SK-N-SH (cell line): ENCODE measurements at regions of chr10 and their contacts with region 1.

Region 1: GRCh38 chr10:116787893-116788665 is 45.7 kb upstream of the HSPA12A start:
- DNase-seq: peak; percentile 88
- H3K4me3 ChIP-seq: peak overlapping the region; percentile 29 to 53; a peak in 2 of 4 replicates
- H3K27ac ChIP-seq: no peak overlapping the region
- H3K4me1 ChIP-seq: peaks cover 0 to 3% of the 10 kb centered on the region in 2 experiments; a peak in 1 of 4 replicates
- H3K27me3 ChIP-seq: no peaks in the 10 kb centered on the region
- CTCF ChIP-seq: peak; percentile 99
- EP300 ChIP-seq: no peak
- RAD21 ChIP-seq: peak; percentile 87

Region 2: GRCh38 chr10:116627386-116627933 is 160.6 kb before region 1 on chr10:
- CTCF ChIA-PET with region 1: interaction called, 142 read pairs
- POLR2A ChIA-PET with region 1: no interaction called
- DNase-seq: peak; percentile 92
- H3K4me3 ChIP-seq: peak overlapping the region; percentile 32 to 39
- H3K27ac ChIP-seq: no peak overlapping the region
- H3K4me1 ChIP-seq: no peaks in the 10 kb centered on the region; a peak in 1 of 4 replicates
- H3K27me3 ChIP-seq: peaks cover 5% of the 10 kb centered on the region; the same call in 1 of the 2 replicates
- CTCF ChIP-seq: peak; percentile 45
- EP300 ChIP-seq: no peak
- RAD21 ChIP-seq: peak; percentile 65

Region 3: DNA sequence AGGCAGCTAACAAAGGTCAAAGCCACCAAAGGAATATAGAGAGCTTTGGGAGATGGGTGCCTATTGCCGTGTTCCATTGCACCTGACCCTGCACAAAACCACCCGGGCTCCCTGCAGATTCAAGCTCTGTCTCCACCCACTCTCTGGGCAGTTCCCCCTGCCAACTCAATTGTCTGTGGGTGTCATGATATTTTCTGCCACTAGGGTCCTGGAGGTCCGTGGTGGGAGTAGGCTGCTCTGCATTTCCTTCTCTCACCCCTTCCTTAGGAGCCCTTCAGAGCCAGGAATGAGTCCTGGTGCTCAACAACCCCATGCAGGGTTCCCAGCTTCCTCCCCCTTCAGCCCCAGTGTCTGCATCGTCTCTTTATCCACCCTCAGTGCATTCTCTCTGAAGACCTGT is 133.3 kb before region 1 on chr10:
- CTCF ChIA-PET with region 1: interaction called, 17 read pairs
- POLR2A ChIA-PET with region 1: no interaction called
- DNase-seq: peak; percentile 46
- H3K4me3 ChIP-seq: no peak overlapping the region
- H3K27ac ChIP-seq: no peak overlapping the region
- H3K4me1 ChIP-seq: no peaks in the 10 kb centered on the region; a peak in 1 of 4 replicates
- H3K27me3 ChIP-seq: no peaks in the 10 kb centered on the region
- CTCF ChIP-seq: peak; percentile 40
- EP300 ChIP-seq: no peak
- RAD21 ChIP-seq: no peak

Region 4: GRCh38 chr10:116696919-116697318 is 91.2 kb before region 1 on chr10:
- CTCF ChIA-PET with region 1: interaction called, 18 read pairs
- POLR2A ChIA-PET with region 1: no interaction called
- DNase-seq: no peak
- H3K4me3 ChIP-seq: no peak overlapping the region
- H3K27ac ChIP-seq: no peak overlapping the region
- H3K4me1 ChIP-seq: peaks cover 0 to 16% of the 10 kb centered on the region in 2 experiments; a peak in 1 of 4 replicates
- H3K27me3 ChIP-seq: no peaks in the 10 kb centered on the region
- CTCF ChIP-seq: no peak
- EP300 ChIP-seq: no peak
- RAD21 ChIP-seq: no peak

Region 5: DNA sequence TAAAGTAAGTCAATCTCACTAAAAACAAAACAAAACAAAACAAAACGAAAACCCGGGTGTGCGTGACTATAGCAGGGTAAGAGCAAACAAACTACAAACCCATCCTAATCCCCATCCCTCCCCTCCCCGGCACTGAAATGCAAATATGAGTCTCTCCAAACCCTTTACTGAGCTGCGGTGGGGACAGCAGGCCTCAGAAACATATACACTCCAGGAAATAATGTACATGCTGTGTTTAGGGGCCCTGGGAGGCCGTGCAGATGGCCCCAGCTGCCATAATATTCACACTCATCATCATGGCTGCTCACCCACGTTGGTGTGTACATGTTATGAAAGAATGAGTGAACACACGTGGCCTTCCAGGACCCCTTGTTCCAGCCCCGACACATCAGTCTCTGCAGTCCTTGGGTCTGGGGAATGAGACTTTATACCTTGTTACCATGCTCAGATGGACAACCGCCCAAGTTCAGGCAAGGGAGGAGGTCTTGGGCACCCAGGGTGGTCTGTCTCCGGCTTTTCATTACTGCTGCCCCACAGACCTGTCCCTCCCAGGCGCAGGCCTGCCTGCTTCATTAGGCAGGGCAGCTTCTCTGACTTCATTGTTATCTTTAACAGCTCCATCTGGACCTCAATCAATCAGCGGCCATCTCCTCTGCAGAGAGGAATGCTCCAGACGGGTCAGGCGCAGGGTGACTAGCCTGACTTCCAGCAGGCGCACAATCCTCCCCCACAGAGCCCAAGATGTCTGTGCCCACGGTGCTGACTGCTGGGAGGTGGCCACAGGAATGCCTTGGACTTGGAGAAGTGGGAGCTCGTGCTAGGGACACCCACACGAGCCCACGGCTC is 66.3 kb before region 1 on chr10:
- CTCF ChIA-PET with region 1: interaction called, 16 read pairs
- POLR2A ChIA-PET with region 1: no interaction called
- DNase-seq: peak; percentile 74
- H3K4me3 ChIP-seq: no peak overlapping the region
- H3K27ac ChIP-seq: peak overlapping the region in 1 of 2 experiments; percentile 98; a peak in 2 of 4 replicates
- H3K4me1 ChIP-seq: peaks cover 0 to 80% of the 10 kb centered on the region in 2 experiments; a peak in 2 of 4 replicates
- H3K27me3 ChIP-seq: no peaks in the 10 kb centered on the region
- CTCF ChIP-seq: no peak
- EP300 ChIP-seq: peak in 1 of 2 experiments; percentile 93; a peak in 2 of 4 replicates
- RAD21 ChIP-seq: no peak

Region 6: DNA sequence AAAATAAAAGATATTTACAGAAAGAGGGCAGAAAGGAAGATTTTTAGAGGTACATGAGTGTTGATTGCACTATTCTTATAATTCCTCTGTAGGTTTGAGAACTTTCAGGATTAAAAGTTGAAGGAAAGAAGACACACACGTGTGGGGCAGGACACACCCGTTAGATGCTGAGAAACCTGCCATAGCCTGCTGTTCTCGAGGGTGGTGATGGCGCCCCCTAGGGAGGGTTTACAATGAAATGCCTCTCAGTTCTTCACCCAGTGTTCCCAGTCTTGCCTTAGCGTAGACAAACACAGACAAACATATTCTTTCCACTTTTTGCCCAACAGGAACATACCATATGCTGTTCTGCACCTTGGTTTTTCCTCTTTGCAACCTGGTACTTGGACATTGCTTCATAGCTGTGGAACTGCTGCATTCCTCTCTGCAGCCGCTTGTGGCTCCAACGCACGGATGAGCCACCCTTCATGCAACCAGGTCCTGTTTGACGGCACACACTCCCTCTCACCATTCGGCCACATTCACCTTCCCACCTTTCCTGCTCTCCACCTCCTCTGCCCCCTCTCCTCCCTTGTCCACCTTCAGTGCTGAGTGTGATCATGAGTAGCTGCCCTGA is 22.4 kb before region 1 on chr10:
- CTCF ChIA-PET with region 1: interaction called, 106 read pairs
- POLR2A ChIA-PET with region 1: no interaction called
- DNase-seq: no peak
- H3K4me3 ChIP-seq: no peak overlapping the region
- H3K27ac ChIP-seq: no peak overlapping the region
- H3K4me1 ChIP-seq: peaks cover 0 to 4% of the 10 kb centered on the region in 2 experiments; a peak in 1 of 4 replicates
- H3K27me3 ChIP-seq: no peaks in the 10 kb centered on the region; the same call in 1 of the 2 replicates
- CTCF ChIP-seq: peak; percentile 44
- EP300 ChIP-seq: no peak
- RAD21 ChIP-seq: peak; percentile 25; the same call in 1 of the 2 replicates

Region 7: GRCh38 chr10:116960066-116960776 is 172.1 kb after region 1 on chr10:
- CTCF ChIA-PET with region 1: no interaction called
- POLR2A ChIA-PET with region 1: no interaction called
- DNase-seq: no peak
- H3K4me3 ChIP-seq: no peak overlapping the region
- H3K27ac ChIP-seq: no peak overlapping the region
- H3K4me1 ChIP-seq: peaks cover 7 to 8% of the 10 kb centered on the region in 2 experiments; a peak in 3 of 4 replicates
- H3K27me3 ChIP-seq: no peaks in the 10 kb centered on the region
- CTCF ChIP-seq: no peak
- EP300 ChIP-seq: no peak
- RAD21 ChIP-seq: no peak

Region 8: DNA sequence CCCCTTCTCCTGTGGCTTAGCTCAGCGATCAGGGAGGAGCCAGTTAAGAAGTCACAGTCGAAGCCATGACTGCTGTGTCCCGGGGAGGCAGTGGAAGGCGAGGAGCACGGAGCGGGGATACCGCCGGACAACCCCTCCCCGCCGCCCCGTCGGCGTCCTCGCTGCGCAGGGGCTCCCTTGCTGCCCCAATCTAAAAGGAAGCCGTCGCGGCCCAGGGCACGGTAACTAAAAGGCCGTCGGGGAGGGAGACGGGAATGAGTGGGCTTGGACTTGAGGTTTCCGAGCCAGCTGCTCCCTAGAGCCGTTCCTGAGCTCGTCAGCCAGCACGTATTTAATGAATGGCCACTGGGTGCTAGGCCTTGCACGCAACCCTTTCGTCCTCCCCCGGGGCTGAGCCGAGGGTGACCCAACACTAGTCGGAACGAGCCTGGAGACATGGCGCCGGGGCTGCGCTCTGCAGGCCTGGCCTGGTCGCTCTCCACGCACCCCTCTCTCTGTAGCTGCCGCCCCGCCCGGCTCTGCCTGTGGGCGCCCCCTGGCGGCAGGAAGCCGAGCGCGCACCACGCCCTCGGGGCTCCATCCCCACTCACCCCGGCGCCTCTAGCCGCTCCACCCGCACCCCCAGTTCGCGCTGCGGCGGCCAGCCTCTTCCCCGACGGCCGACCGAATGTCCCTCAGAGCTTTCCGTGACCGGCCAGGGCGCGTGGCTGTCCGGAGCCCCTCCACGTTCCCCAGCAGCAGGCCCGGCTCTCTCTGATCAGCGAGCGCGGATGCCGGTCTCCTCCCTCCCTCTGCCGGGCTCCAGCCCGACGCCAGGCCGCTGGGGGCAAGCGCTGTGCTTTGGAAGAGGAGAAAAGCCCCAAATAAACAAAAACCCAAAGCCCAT is 380.0 kb after region 1 on chr10:
- CTCF ChIA-PET with region 1: interaction called, 60 read pairs
- POLR2A ChIA-PET with region 1: no interaction called
- DNase-seq: peak; percentile 96
- H3K4me3 ChIP-seq: peak overlapping the region; percentile 28 to 37
- H3K27ac ChIP-seq: no peak overlapping the region
- H3K4me1 ChIP-seq: peaks cover 0 to 9% of the 10 kb centered on the region in 2 experiments; a peak in 1 of 4 replicates
- H3K27me3 ChIP-seq: peaks cover 85% of the 10 kb centered on the region
- CTCF ChIP-seq: peak; percentile 82
- EP300 ChIP-seq: no peak
- RAD21 ChIP-seq: peak; percentile 57

Region 9: DNA sequence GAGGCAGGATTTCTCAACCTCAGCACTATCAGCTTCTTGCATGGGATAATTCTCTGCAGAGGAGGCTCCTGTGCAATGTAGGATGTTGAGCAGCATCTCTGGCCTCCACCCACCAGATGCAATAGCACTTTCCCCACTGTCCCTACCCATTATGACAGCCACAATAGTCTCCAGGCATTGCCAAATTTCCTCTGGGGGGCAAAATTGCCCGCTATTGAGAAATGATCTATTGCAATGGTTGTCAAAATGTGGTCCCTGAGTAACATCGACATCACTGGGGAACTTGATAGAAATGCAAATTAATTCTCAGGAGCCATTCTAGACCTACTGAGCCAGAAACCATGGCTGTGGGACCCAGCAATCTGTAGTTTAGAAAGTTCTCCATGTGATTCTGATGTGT is 416.2 kb after region 1 on chr10:
- CTCF ChIA-PET with region 1: no interaction called
- POLR2A ChIA-PET with region 1: no interaction called
- DNase-seq: no peak
- H3K4me3 ChIP-seq: no peak overlapping the region
- H3K27ac ChIP-seq: no peak overlapping the region
- H3K4me1 ChIP-seq: no peaks in the 10 kb centered on the region
- H3K27me3 ChIP-seq: no peaks in the 10 kb centered on the region
- CTCF ChIP-seq: no peak
- EP300 ChIP-seq: no peak
- RAD21 ChIP-seq: no peak